Mammary epithelial cell (primary cell): ENCODE measurements at regions of chr10 and their contacts with region 1.

Region 1: GRCh38 chr10:5684318-5684970 is at the start of gene TASOR2:
- DNase-seq: peak; percentile 98
- H3K4me3 ChIP-seq: peak within 1 kb of the TSS; percentile 76 to 91 (median 81)
- H3K27ac ChIP-seq: peak within 1 kb of the TSS; percentile 64
- H3K4me1 ChIP-seq: peaks cover 5% of the 10 kb centered on the region
- H3K27me3 ChIP-seq: no peaks in the 10 kb centered on the region
- CTCF ChIP-seq: no peak
- total RNA-seq, gene TASOR2: 73.1 to 82.0 TPM

Region 2: GRCh38 chr10:5710859-5711258 is 26.4 kb after region 1 on chr10:
- CTCF ChIA-PET with region 1: no interaction called
- dilution Hi-C with region 1: no loop called
- in situ Hi-C with region 1: no loop called
- intact Hi-C with region 1: loop called (anchors 2 kb)
- DNase-seq: no peak
- H3K4me3 ChIP-seq: peak overlapping the region; percentile 17 to 62 (median 41)
- H3K27ac ChIP-seq: peak overlapping the region; percentile 47
- H3K4me1 ChIP-seq: no peaks in the 10 kb centered on the region
- H3K27me3 ChIP-seq: no peaks in the 10 kb centered on the region
- CTCF ChIP-seq: no peak

Region 3: DNA sequence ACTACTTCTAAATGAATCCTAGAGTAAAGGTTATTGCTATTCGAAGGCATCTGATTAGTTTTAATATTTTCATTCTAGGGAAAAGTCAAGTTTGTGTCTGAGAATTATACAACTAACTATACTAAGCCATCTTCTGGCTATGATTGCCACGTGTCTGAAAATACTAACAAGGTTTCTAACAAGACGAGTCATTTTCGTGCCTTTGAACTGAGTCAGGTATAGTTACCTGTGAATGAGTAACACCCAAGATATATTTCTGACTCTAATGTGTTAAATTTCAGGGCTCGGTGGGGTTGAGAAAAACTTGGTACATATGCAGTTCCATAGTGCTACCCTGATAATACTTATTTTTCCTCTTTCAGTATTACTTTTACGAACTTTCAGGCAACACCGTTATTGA is 35.7 kb after region 1 on chr10:
- CTCF ChIA-PET with region 1: no interaction called
- dilution Hi-C with region 1: no loop called
- in situ Hi-C with region 1: no loop called
- intact Hi-C with region 1: loop called (anchors 2 kb)
- DNase-seq: peak; percentile 58
- H3K4me3 ChIP-seq: no peak overlapping the region
- H3K27ac ChIP-seq: no peak overlapping the region
- H3K4me1 ChIP-seq: peaks cover 7% of the 10 kb centered on the region
- H3K27me3 ChIP-seq: no peaks in the 10 kb centered on the region
- CTCF ChIP-seq: no peak

Region 4: DNA sequence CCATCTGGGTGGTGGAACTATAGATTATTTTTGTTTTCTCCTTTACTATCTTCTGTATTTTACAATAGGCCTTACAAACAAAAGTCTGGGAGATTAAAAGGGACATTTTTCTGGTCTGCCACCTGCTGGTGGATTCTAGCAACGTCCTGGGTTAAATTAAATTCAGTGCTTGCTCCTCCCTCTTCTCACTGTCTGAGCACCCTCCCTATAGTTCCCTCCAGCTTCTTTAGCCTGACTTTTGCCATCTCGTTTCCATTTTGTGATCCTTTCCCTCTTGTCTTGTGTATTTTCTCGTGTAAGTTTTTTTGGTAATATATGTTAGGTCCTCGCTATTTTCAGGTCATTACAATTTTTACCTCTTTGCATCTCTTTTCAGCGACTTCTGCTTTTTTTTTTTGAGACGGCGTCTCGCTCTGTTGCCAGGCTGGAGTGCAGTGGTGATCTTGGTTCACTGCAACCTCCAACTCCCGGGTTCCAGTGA is 189.1 kb after region 1 on chr10:
- CTCF ChIA-PET with region 1: no interaction called
- dilution Hi-C with region 1: no loop called
- in situ Hi-C with region 1: no loop called
- intact Hi-C with region 1: loop called (anchors 1 kb)
- DNase-seq: peak; percentile 57
- H3K4me3 ChIP-seq: no peak overlapping the region
- H3K27ac ChIP-seq: no peak overlapping the region
- H3K4me1 ChIP-seq: no peaks in the 10 kb centered on the region
- H3K27me3 ChIP-seq: no peaks in the 10 kb centered on the region
- CTCF ChIP-seq: peak; percentile 62 to 65